Dorsolateral prefrontal cortex (tissue), 120 donors: ENCODE measurements at regions of chr18 and their contacts with region 1.

Region 1: GRCh38 chr18:56067969-56068671 is 480.1 kb upstream of the TCF4 start:
- DNase-seq: no peak
- H3K4me3 ChIP-seq: no peak overlapping the region
- H3K27ac ChIP-seq: peak overlapping the region in 13 of 59 donors; percentile 10 to 81 (median 44)
- H3K27me3 ChIP-seq: no peaks in the 10 kb centered on the region
- CTCF ChIP-seq: no peak

Region 2: DNA sequence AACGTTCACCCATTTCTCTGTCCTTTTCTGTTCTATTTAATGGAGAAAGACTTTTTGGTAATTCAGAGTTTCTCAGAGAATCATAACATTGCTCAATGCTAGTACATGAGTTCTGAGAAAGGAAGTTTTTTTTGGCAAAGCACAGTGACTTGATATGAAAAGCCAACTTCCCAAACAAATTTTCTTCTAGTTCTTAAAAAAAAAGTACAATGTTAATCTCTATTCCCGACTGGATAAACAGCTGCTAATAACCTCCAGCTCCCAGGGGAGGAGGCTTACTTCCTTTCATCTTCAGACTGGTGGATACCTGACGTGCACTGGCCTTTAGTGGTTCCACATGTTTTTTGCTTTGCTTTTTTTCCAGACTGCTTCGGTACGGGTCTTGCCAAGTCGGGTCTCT is 824.3 kb before region 1 on chr18:
- intact Hi-C with region 1: no loop called
- DNase-seq: no peak
- H3K4me3 ChIP-seq: peak overlapping the region in 5 of 59 donors; percentile 2 to 15 (median 10)
- H3K27ac ChIP-seq: peak overlapping the region in 55 of 59 donors; percentile 19 to 90 (median 80)
- H3K27me3 ChIP-seq: no peaks in the 10 kb centered on the region
- CTCF ChIP-seq: no peak

Region 3: DNA sequence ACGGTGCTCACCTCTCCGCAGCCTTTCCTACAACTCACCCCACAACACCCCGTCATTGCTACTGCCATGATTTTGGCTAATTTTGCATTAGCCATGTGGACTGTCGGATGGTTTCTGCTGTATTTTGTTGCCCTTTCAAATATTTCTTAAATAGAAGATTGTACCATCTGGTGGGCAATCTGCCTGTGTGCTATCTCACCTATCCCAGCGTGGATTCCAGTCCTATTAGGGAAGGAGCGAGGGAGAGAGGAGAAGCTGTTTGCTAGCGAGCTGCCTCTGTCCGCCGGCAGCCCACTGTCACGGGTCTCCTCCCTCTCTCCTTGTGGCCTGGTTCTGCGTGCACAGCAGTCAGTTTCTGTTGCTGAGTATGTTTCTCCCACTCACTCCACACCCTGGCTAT is 234.0 kb after region 1 on chr18:
- intact Hi-C with region 1: loop called in 1 of 2 experiments (anchors 5 kb)
- DNase-seq: peak in 3 of 10 donors; percentile 24 to 49 (median 29)
- H3K4me3 ChIP-seq: no peak overlapping the region
- H3K27ac ChIP-seq: no peak overlapping the region
- H3K27me3 ChIP-seq: no peaks in the 10 kb centered on the region
- CTCF ChIP-seq: no peak